ENCODE measurements at regions of chr6 and their contacts with region 1.

Region 1: DNA sequence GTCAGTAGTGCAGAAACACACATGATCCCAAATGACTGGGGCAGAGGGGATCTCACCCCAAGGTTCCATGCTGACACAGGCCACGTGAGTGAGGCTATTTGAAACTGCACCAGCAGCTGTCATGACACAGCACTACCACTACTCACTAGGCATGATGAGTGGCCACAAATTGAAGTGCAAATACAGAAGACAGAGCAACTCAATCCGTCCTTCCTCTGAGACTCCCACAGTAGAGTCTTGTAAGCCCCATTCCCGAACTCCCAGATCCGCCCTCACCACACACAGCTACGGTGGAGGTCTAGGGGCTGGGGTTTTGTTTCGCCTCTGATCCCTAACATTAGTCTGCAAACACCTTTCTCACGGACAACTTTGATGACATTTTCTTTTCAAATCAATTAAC is 113.3 kb upstream of the NUP153 start:
- DNase-seq: no peak
- ATAC-seq: no peak
- H3K4me3 Mint-ChIP-seq: no peak overlapping the region
- H3K27ac Mint-ChIP-seq: no peak overlapping the region
- H3K4me1 Mint-ChIP-seq: no peaks in the 10 kb centered on the region
- H3K27me3 Mint-ChIP-seq: no peaks in the 10 kb centered on the region
- CTCF ChIP-seq: no peak

Region 2: DNA sequence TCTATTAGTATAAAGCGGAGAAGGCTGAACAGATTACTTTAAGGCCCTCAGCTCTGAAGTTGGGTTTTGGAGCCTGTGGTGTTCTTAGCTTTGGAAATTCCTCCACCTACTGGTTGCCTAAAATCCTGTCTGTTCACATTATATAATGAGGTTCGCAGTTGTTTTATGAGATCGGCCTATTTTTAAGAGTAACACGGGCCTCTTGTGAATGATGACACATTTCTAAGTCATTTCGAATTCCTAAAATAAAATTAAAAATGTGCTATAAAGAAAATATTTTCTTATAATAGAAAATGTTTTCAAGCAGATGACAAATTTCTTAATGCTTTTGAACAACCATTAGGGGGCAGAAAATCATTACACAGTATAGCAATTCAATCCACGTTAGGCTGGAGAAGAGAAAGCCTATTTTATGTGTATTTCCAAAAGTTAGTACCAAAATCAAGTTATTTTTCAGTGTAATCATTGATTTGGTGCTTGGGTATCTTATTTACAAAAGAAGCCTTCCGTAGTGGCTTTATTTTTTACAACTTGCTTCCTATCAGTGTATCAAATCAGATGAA is 235.7 kb before region 1 on chr6:
- CTCF ChIA-PET with region 1: interaction called, 6 read pairs
- POLR2A ChIA-PET with region 1: no interaction called
- intact Hi-C with region 1: loop called (anchors 1 kb)
- DNase-seq: no peak
- ATAC-seq: peak; percentile 52
- H3K4me3 Mint-ChIP-seq: no peak overlapping the region
- H3K27ac Mint-ChIP-seq: peak overlapping the region; percentile 19
- H3K4me1 Mint-ChIP-seq: peaks cover 3% of the 10 kb centered on the region
- H3K27me3 Mint-ChIP-seq: peaks cover 2% of the 10 kb centered on the region
- CTCF ChIP-seq: peak; percentile 83

Region 3: DNA sequence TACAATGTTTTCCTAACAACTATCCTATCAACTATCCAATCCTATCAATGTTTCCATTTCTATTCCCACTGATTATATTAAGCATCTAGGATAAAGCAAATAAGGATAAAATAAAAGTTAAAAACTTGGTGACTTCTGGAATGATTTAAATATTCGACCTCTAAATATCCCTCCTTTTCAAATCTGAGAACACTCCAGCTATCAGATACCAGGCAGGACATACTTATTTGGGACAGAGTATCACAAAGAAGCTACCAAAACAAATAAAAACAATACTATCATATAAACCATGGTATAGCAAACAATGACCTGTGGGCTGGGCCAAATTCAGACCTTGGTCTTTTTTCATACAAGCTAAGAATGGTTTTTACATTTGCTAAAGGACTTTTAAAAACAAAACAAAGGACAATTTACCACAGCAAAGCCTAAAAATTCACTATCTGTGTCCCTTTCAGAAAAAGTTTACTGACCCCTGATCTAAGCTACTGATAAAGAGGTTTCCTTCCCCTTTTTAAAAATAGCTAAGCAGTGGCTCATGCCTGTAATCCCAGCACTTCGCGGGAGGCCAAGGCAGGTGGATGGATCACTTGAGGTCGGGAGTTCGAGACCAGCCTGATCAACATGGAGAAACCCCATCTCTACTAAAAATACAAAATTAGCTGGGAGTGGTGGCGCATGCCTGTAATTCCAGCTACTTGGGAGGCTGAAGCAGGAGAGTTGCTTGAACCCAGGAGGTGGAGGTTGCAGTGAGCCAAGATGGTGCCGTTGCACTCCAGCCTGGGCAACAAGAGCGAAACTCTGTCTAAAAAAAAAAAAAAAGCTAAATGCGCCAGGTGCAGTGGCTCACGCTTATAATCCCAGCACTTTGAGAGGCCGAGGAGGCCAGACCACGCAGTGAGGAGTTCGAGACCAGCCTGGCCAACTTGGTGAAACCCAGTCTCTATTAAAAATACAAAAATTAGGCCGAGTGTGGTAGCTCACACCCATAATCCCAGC is 119.3 kb before region 1 on chr6:
- CTCF ChIA-PET with region 1: interaction called, 3 read pairs
- POLR2A ChIA-PET with region 1: no interaction called
- intact Hi-C with region 1: loop called (anchors 5 kb)
- DNase-seq: no peak
- ATAC-seq: no peak
- H3K4me3 Mint-ChIP-seq: peak overlapping the region; percentile 52
- H3K27ac Mint-ChIP-seq: peak overlapping the region; percentile 80
- H3K4me1 Mint-ChIP-seq: peaks cover 80% of the 10 kb centered on the region
- H3K27me3 Mint-ChIP-seq: no peaks in the 10 kb centered on the region
- CTCF ChIP-seq: no peak

Region 4: GRCh38 chr6:17758119-17758518 is 61.9 kb before region 1 on chr6:
- CTCF ChIA-PET with region 1: no interaction called
- POLR2A ChIA-PET with region 1: no interaction called
- intact Hi-C with region 1: no loop called
- DNase-seq: no peak
- ATAC-seq: no peak
- H3K4me3 Mint-ChIP-seq: no peak overlapping the region
- H3K27ac Mint-ChIP-seq: no peak overlapping the region
- H3K4me1 Mint-ChIP-seq: no peaks in the 10 kb centered on the region
- H3K27me3 Mint-ChIP-seq: no peaks in the 10 kb centered on the region
- CTCF ChIP-seq: no peak

Region 5: GRCh38 chr6:18047406-18047805 is 227.4 kb after region 1 on chr6:
- CTCF ChIA-PET with region 1: no interaction called
- POLR2A ChIA-PET with region 1: no interaction called
- intact Hi-C with region 1: no loop called
- DNase-seq: no peak
- ATAC-seq: no peak
- H3K4me3 Mint-ChIP-seq: no peak overlapping the region
- H3K27ac Mint-ChIP-seq: no peak overlapping the region
- H3K4me1 Mint-ChIP-seq: no peaks in the 10 kb centered on the region
- H3K27me3 Mint-ChIP-seq: no peaks in the 10 kb centered on the region
- CTCF ChIP-seq: no peak

Measured in activated B cell treated with CpG ODN at 0.5 μM for 24 hours (primary cell).